CD14-positive monocyte (primary cell): ENCODE measurements at regions of chr9 and their contacts with region 1.

Region 1: DNA sequence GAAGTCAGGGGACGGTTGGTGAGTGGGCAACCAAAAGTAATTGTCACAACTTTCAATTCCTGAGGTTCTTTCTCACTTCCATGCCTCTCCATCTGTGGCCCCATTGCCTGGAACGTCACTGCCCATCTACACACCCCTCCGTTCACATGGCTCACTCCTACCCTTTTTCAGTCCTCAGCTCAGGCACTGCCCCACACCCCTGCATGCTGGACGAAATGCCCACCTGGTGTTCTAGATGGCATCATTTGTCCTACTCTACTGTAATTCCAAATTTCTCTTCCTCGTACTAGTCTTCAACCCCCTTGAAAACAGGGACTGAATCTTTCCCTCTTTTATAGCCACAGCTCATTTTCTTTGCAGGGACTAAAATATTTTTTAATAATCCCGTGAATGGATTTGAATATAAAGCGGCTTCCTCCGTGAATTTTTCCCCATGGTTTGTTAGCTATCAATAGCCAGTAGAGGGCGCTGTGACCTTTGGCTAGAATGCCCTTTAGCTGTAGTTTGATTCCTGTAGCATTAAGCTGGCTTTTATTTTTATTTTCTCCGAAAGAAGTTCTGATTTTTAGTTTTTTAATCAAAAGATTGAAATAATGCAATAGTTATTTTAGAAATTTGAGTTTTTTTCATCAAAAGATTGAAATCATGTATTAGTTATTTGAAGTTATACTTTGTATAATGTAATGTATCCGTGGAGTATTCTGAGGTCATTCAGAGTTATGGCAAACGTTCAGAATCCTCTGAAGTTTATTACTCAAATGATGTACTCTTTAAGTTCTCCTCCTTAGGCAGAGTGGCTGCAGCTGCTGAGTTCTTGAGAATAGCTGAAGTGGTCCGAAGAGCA is 232.1 kb downstream of the SH3GL2 start:
- DNase-seq: peak in 2 of 3 donors; percentile 9 to 28
- H3K4me3 ChIP-seq: no peak overlapping the region
- H3K4me3 Mint-ChIP-seq: no peak overlapping the region
- H3K27ac ChIP-seq: no peak overlapping the region
- H3K27ac Mint-ChIP-seq: no peak overlapping the region
- H3K4me1 ChIP-seq: no peaks in the 10 kb centered on the region
- H3K4me1 Mint-ChIP-seq: no peaks in the 10 kb centered on the region
- H3K27me3 ChIP-seq: no peaks in the 10 kb centered on the region
- H3K27me3 Mint-ChIP-seq: peaks cover 0 to 3% (median 0%) of the 10 kb centered on the region in 3 donors
- CTCF ChIP-seq: peak; percentile 79

Region 2: DNA sequence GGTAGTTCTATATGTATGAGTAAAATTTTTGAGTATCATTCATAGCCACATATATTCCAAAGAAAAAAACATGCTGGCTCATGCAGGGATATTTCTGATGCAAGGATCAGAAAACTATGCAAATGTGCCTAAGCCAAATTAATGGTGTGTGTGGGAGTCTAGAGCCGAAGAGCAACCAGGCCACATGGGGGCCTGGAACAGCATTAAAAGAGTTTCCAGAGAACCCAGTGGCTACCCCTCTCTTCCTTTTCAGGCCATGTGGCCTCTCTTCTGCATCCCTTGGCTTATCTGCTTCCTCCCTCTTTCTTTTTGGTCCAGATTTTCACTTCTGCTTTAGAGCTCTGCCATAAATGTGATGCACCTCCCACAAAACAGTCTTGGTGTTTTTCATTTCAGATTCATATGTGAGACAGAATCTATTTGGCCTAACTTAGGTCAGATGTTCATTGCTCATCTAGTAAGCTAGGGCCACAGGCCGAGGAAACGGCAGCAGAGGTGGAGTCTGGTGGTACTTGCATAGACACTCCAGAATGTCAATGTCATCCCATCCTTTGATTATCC is 67.9 kb after region 1 on chr9:
- intact Hi-C with region 1: loop called in 1 of 2 experiments (anchors 10 kb)
- DNase-seq: no peak
- H3K4me3 ChIP-seq: no peak overlapping the region
- H3K4me3 Mint-ChIP-seq: no peak overlapping the region
- H3K27ac ChIP-seq: no peak overlapping the region
- H3K27ac Mint-ChIP-seq: no peak overlapping the region
- H3K4me1 ChIP-seq: no peaks in the 10 kb centered on the region
- H3K4me1 Mint-ChIP-seq: no peaks in the 10 kb centered on the region
- H3K27me3 ChIP-seq: no peaks in the 10 kb centered on the region
- H3K27me3 Mint-ChIP-seq: no peaks in the 10 kb centered on the region
- CTCF ChIP-seq: no peak

Region 3: GRCh38 chr9:19456996-19457692 is 1646.2 kb after region 1 on chr9:
- intact Hi-C with region 1: loop called in 1 of 2 experiments (anchors 5 kb)
- DNase-seq: peak; percentile 47 to 72 (median 63)
- H3K4me3 ChIP-seq: peak overlapping the region in 2 of 3 experiments; percentile 10 to 37
- H3K4me3 Mint-ChIP-seq: peak overlapping the region; percentile 13 to 84
- H3K27ac ChIP-seq: no peak overlapping the region
- H3K27ac Mint-ChIP-seq: no peak overlapping the region
- H3K4me1 ChIP-seq: peaks cover 5 to 8% of the 10 kb centered on the region in 2 donors
- H3K4me1 Mint-ChIP-seq: peaks cover 10% of the 10 kb centered on the region
- H3K27me3 ChIP-seq: no peaks in the 10 kb centered on the region
- H3K27me3 Mint-ChIP-seq: peaks cover 0 to 6% (median 0%) of the 10 kb centered on the region in 3 donors
- CTCF ChIP-seq: peak; percentile 98